WTC11 (cell line): ENCODE measurements at regions of chr18 and their contacts with region 1.

Region 1: GRCh38 chr18:37322492-37323035 is 243.0 kb downstream of the CELF4 start:
- DNase-seq: peak; percentile 73
- ATAC-seq: peak; percentile 85
- H3K4me3 Mint-ChIP-seq: no peak overlapping the region
- H3K27ac Mint-ChIP-seq: no peak overlapping the region
- H3K4me1 Mint-ChIP-seq: peaks cover 10% of the 10 kb centered on the region
- H3K27me3 Mint-ChIP-seq: peaks cover 9% of the 10 kb centered on the region
- CTCF ChIP-seq: peak; percentile 84

Region 2: DNA sequence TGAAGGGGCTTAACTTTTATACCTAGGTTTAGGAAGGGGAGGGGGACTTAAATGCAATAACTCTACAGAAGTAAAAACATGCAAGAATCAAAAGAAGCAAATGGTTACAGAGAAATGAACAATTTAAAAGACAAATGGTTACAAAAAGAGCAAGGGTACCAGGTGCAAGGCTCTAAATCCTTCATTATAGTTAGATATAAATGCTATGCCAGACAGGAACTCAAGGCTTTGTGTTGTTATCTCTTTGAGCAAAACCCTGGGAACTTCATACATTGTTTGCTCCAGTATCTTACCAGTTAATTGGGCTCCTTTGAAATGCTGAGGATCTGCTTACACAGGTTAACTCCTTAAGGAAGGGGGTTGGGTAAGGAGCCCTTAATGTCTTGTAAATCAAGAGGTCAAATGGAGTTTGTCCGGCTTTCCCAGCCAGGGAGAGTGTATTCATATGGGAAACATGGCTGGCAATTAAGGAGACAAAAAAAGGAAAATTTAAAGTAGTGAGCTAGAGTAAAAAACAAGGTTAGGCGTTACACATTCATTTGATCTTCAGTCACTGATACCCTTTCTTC is 104.5 kb before region 1 on chr18:
- CTCF ChIA-PET with region 1: no interaction called
- POLR2A ChIA-PET with region 1: no interaction called
- DNase-seq: no peak
- ATAC-seq: peak; percentile 79
- H3K4me3 Mint-ChIP-seq: peak overlapping the region; percentile 32
- H3K27ac Mint-ChIP-seq: no peak overlapping the region
- H3K4me1 Mint-ChIP-seq: peaks cover 26% of the 10 kb centered on the region
- H3K27me3 Mint-ChIP-seq: peaks cover 100% of the 10 kb centered on the region
- CTCF ChIP-seq: no peak

Region 3: GRCh38 chr18:37335409-37335736 is 12.8 kb after region 1 on chr18:
- CTCF ChIA-PET with region 1: interaction called, 26 read pairs
- POLR2A ChIA-PET with region 1: no interaction called
- DNase-seq: peak; percentile 29
- ATAC-seq: peak; percentile 49; the same call in 1 of the 2 replicates
- H3K4me3 Mint-ChIP-seq: no peak overlapping the region
- H3K27ac Mint-ChIP-seq: no peak overlapping the region
- H3K4me1 Mint-ChIP-seq: peaks cover 5% of the 10 kb centered on the region
- H3K27me3 Mint-ChIP-seq: peaks cover 2% of the 10 kb centered on the region; the same call in 1 of the 2 replicates
- CTCF ChIP-seq: no peak